ENCODE measurements at regions of chr4 and their contacts with region 1.

Region 1: GRCh38 chr4:114386637-114387233 is 211.9 kb upstream of the UGT8 start:
- DNase-seq: peak in 1 of 4 donors; percentile 25
- ATAC-seq: peak; percentile 45
- H3K4me3 ChIP-seq: no peak overlapping the region
- H3K27ac ChIP-seq: no peak overlapping the region
- H3K4me1 ChIP-seq: no peaks in the 10 kb centered on the region
- H3K27me3 ChIP-seq: no peaks in the 10 kb centered on the region
- CTCF ChIP-seq: peak; percentile 15 to 87 (median 79)
- POLR2A ChIP-seq: no peak

Region 2: DNA sequence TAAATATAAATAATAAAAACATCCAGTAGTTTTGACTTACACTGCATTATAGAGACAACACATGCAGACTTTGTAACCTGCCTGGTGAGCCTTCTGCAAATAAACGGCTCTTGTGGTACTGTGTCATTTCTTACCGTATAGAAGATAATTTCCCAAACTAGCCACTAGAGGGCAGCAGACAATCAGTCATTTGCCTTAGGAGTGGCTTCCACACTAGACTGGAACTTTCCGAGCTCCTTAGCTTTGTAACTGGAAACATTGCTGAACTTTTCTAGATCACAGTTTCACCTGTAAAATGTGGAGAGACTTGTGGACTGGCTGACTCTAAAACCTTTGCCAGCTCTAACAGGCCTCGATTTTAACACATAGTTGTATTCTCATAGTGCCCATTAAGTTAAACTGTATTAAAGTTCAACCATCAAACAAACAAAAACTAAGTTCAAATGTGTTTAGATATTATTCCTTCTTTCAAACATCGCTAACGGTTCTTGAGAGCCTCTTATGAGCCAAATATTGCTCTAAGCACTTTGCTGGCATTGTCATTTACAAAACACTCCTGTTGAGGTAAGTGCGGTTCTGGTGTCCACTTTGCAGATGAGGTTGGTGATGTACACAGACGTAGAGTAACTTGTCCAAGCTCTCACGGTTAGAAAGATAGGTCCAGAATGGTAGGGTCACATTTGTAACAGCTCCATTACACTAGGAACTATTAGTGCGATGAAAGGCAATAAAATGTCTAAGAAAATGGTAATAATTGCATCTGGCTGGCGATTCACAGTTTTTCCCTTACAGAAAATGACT is 991.8 kb before region 1 on chr4:
- intact Hi-C with region 1: loop called (anchors 10 kb)
- DNase-seq: peak; percentile 55 to 78 (median 64)
- ATAC-seq: peak; percentile 98
- H3K4me3 ChIP-seq: no peak overlapping the region
- H3K27ac ChIP-seq: no peak overlapping the region
- H3K4me1 ChIP-seq: peaks cover 4% of the 10 kb centered on the region
- H3K27me3 ChIP-seq: no peaks in the 10 kb centered on the region
- CTCF ChIP-seq: peak; percentile 64 to 96 (median 79)
- POLR2A ChIP-seq: no peak

Region 3: DNA sequence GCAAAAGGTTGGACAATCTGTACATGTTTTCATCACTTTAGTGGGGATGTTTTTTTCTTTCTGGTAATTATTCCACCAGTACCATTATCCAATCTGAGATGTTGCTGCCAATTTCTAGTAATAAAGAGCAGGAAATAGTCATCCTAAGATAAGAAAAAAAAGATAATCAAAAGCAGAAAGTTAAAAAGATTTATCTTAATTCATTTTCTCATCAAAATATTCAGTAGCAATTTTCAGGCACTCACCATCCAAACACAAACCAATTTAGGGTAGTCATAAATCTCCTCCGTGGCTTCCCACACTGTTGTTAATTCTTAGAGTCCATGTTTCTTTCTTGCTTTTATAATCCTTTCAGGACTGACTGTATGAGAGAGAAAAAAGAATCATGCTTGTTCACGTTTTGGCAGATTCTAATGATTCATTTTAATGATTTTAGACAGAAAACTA is 51.8 kb before region 1 on chr4:
- intact Hi-C with region 1: no loop called
- DNase-seq: no peak
- ATAC-seq: no peak
- H3K4me3 ChIP-seq: no peak overlapping the region
- H3K27ac ChIP-seq: no peak overlapping the region
- H3K4me1 ChIP-seq: no peaks in the 10 kb centered on the region
- H3K27me3 ChIP-seq: no peaks in the 10 kb centered on the region
- CTCF ChIP-seq: no peak
- POLR2A ChIP-seq: no peak

Region 4: GRCh38 chr4:114598191-114599121 is 211.7 kb after region 1 on chr4 and contains the start of gene UGT8:
- intact Hi-C with region 1: no loop called
- DNase-seq: peak; percentile 84 to 91 (median 84)
- ATAC-seq: peak; percentile 87
- H3K4me3 ChIP-seq: peak within 1 kb of the TSS; percentile 49 to 66
- H3K27ac ChIP-seq: peak within 1 kb of the TSS; percentile 66 to 85 (median 79)
- H3K4me1 ChIP-seq: peaks cover 26% of the 10 kb centered on the region
- H3K27me3 ChIP-seq: no peaks in the 10 kb centered on the region
- CTCF ChIP-seq: no peak
- POLR2A ChIP-seq: peak; percentile 51 to 64 (median 58)
- total RNA-seq, gene UGT8: 8.3 to 8.9 TPM

Region 5: GRCh38 chr4:114659386-114660008 is 272.8 kb after region 1 on chr4:
- intact Hi-C with region 1: loop called (anchors 5 kb)
- DNase-seq: peak; percentile 65 to 76 (median 72)
- ATAC-seq: peak; percentile 91
- H3K4me3 ChIP-seq: no peak overlapping the region
- H3K27ac ChIP-seq: no peak overlapping the region
- H3K4me1 ChIP-seq: peaks cover 4% of the 10 kb centered on the region
- H3K27me3 ChIP-seq: no peaks in the 10 kb centered on the region
- CTCF ChIP-seq: peak; percentile 61 to 85 (median 82)
- POLR2A ChIP-seq: no peak